GM12878 (cell line): ENCODE measurements at regions of chr6 and their contacts with region 1.

Region 1: GRCh38 chr6:95091823-95092436 is 485.4 kb upstream of the MANEA start:
- DNase-seq: no peak
- ATAC-seq: peak; percentile 88
- H3K4me3 ChIP-seq: no peak overlapping the region
- H3K27ac ChIP-seq: no peak overlapping the region
- H3K4me1 ChIP-seq: no peaks in the 10 kb centered on the region
- H3K27me3 ChIP-seq: no peaks in the 10 kb centered on the region
- CTCF ChIP-seq: peak; percentile 44 to 59 (median 45); a peak in 5 of 6 replicates
- EP300 ChIP-seq: no peak
- POLR2A ChIP-seq: no peak
- RAD21 ChIP-seq: peak; percentile 72

Region 2: GRCh38 chr6:94636780-94637385 is 455.0 kb before region 1 on chr6:
- CTCF ChIA-PET with region 1: interaction called, 14 read pairs
- POLR2A ChIA-PET with region 1: no interaction called
- RAD21 ChIA-PET with region 1: interaction called, 5 read pairs
- SMC1A ChIA-PET with region 1: interaction called, 24 read pairs
- in situ Hi-C with region 1: no loop called
- intact Hi-C with region 1: loop called (anchors 1 kb)
- DNase-seq: no peak
- ATAC-seq: peak; percentile 81
- H3K4me3 ChIP-seq: no peak overlapping the region
- H3K27ac ChIP-seq: no peak overlapping the region
- H3K4me1 ChIP-seq: no peaks in the 10 kb centered on the region
- H3K27me3 ChIP-seq: no peaks in the 10 kb centered on the region
- CTCF ChIP-seq: peak in 2 of 3 experiments; percentile 21 to 48; a peak in 2 of 6 replicates
- EP300 ChIP-seq: no peak
- POLR2A ChIP-seq: no peak
- RAD21 ChIP-seq: 0 out of 2 replicates have a peak, but pooled peaks have one; percentile 22

Region 3: GRCh38 chr6:95159557-95159956 is 67.6 kb after region 1 on chr6:
- CTCF ChIA-PET with region 1: no interaction called
- POLR2A ChIA-PET with region 1: no interaction called
- RAD21 ChIA-PET with region 1: no interaction called
- SMC1A ChIA-PET with region 1: no interaction called
- in situ Hi-C with region 1: no loop called
- intact Hi-C with region 1: no loop called
- DNase-seq: no peak
- ATAC-seq: no peak
- H3K4me3 ChIP-seq: no peak overlapping the region
- H3K27ac ChIP-seq: no peak overlapping the region
- H3K4me1 ChIP-seq: no peaks in the 10 kb centered on the region
- H3K27me3 ChIP-seq: no peaks in the 10 kb centered on the region
- CTCF ChIP-seq: no peak
- EP300 ChIP-seq: no peak
- POLR2A ChIP-seq: no peak
- RAD21 ChIP-seq: no peak